ENCODE measurements at regions of chr18 and their contacts with region 1.

Region 1: DNA sequence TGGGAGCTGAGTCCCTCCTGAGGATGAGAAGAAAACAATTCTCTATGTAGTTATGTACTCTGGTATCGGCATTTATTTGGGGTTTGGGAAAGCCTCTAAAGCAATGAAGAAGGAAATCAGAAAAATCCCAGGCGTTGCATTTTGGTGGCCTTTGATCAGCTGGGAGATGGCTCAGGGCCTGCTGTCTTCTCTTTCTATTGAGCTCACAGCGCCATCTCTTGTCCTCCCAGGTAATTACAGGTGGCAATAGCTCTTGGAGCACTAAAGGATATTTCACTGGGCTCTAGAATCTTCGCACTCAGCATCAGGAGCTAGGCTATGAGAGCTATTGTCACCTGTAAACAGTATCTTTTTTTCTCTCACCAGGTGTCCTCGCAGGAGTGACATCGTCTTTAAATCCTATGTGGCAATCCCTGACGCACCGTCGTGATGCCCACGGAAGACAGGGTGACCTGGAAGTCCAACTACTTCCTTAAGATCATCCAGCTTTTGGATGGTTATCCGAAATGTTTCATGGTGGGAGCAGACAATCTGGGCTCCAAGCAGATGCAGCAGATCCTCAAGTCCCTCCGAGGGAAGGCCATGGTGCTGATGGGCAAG is 76.1 kb upstream of the PMAIP1 start:
- DNase-seq: peak; percentile 41 to 89
- H3K4me3 ChIP-seq: no peak overlapping the region
- H3K27ac ChIP-seq: no peak overlapping the region
- H3K4me1 ChIP-seq: no peaks in the 10 kb centered on the region
- H3K27me3 ChIP-seq: no peaks in the 10 kb centered on the region
- CTCF ChIP-seq: peak; percentile 44 to 91 (median 88)
- EP300 ChIP-seq: no peak
- POLR2A ChIP-seq: no peak
- RAD21 ChIP-seq: peak; percentile 98 to 99

Region 2: GRCh38 chr18:59453468-59453961 is 370.2 kb before region 1 on chr18:
- CTCF ChIA-PET with region 1: interaction called, 106 read pairs
- POLR2A ChIA-PET with region 1: no interaction called
- DNase-seq: no peak
- H3K4me3 ChIP-seq: no peak overlapping the region
- H3K27ac ChIP-seq: no peak overlapping the region
- H3K4me1 ChIP-seq: peaks cover 0 to 5% (median 1%) of the 10 kb centered on the region in 4 experiments; a peak in 2 of 7 replicates
- H3K27me3 ChIP-seq: no peaks in the 10 kb centered on the region
- CTCF ChIP-seq: no peak
- EP300 ChIP-seq: no peak
- POLR2A ChIP-seq: no peak
- RAD21 ChIP-seq: no peak

Region 3: GRCh38 chr18:59470561-59471121 is 353.1 kb before region 1 on chr18:
- CTCF ChIA-PET with region 1: interaction called, 11 read pairs
- POLR2A ChIA-PET with region 1: no interaction called
- DNase-seq: no peak
- H3K4me3 ChIP-seq: no peak overlapping the region
- H3K27ac ChIP-seq: no peak overlapping the region
- H3K4me1 ChIP-seq: no peaks in the 10 kb centered on the region; a peak in 1 of 7 replicates
- H3K27me3 ChIP-seq: no peaks in the 10 kb centered on the region
- CTCF ChIP-seq: no peak
- EP300 ChIP-seq: no peak
- POLR2A ChIP-seq: no peak
- RAD21 ChIP-seq: no peak

Region 4: DNA sequence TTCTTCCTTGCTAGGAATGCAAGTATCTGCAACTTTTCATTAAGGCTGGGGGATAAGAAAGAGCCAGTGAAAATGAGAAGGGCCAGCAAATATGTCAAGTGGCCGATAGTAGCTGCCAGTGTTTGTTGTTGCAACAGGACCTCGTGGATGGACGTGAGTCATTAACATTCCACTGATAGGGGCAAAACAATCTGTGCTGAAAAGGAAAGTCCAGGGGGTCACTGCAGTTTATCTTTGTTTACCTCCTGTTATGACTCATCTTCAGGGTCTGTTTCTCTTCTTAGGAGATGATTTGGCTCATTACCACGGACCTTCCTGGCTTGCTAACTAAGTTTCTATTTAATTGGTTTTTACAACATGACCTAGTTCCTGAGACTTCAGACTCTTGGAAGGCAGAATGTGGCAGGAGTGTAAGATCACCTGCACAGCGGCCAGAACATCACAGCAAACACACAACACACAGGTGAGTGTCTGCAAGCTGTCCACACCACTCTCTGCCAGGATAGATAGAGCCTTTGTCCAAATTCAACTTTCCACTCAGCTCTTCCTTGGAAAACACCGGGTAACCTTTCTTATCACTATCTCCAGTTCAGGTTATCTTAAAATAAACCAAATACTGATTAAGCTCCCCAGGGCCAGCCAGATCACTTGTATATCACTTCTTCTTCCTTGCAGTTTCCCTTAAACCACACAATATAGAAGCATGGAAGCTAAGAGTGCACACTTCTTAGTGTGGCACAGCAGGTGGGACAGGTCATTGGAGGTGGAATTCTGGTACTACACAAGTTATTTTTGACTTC is 307.1 kb before region 1 on chr18:
- CTCF ChIA-PET with region 1: no interaction called
- POLR2A ChIA-PET with region 1: no interaction called
- DNase-seq: no peak
- H3K4me3 ChIP-seq: no peak overlapping the region
- H3K27ac ChIP-seq: no peak overlapping the region
- H3K4me1 ChIP-seq: no peaks in the 10 kb centered on the region; a peak in 1 of 7 replicates
- H3K27me3 ChIP-seq: no peaks in the 10 kb centered on the region
- CTCF ChIP-seq: no peak
- EP300 ChIP-seq: no peak
- POLR2A ChIP-seq: no peak
- RAD21 ChIP-seq: no peak

Region 5: DNA sequence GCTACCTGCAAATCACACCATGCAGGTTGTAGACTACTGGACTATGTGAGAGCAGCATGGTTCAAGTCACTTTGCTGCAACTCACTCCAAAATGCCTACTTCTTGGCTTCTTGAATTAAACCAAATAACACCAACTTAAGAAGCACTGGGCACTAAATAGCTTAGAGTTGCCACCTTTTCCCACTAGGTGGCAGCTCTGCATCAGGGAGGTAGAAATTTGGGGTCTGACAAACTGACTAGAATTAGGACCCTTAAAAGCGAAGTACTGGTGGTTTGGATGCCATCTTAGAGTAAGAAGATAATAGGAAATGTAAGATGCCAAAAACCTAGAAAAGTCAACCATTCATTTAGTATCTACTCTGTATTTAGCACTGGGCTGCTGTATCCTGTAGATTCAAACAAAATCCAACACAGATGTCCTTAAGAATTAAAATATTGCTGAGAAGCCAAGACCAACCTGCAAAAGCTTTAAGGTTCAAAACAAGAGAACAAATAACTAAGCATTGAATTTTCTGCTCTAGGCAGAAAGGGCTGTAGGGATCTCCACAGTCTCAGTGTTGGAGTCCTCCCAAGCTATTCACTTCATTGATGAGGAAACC is 192.0 kb before region 1 on chr18:
- CTCF ChIA-PET with region 1: interaction called, 144 read pairs
- POLR2A ChIA-PET with region 1: interaction called, 4 read pairs
- DNase-seq: peak in 1 of 2 experiments; percentile 59
- H3K4me3 ChIP-seq: no peak overlapping the region
- H3K27ac ChIP-seq: no peak overlapping the region
- H3K4me1 ChIP-seq: peaks cover 0 to 9% (median 3%) of the 10 kb centered on the region in 4 experiments; a peak in 4 of 7 replicates
- H3K27me3 ChIP-seq: no peaks in the 10 kb centered on the region
- CTCF ChIP-seq: peak in 2 of 3 experiments; percentile 80 to 85; a peak in 3 of 4 replicates
- EP300 ChIP-seq: no peak
- POLR2A ChIP-seq: no peak
- RAD21 ChIP-seq: peak; percentile 94 to 95

Region 6: DNA sequence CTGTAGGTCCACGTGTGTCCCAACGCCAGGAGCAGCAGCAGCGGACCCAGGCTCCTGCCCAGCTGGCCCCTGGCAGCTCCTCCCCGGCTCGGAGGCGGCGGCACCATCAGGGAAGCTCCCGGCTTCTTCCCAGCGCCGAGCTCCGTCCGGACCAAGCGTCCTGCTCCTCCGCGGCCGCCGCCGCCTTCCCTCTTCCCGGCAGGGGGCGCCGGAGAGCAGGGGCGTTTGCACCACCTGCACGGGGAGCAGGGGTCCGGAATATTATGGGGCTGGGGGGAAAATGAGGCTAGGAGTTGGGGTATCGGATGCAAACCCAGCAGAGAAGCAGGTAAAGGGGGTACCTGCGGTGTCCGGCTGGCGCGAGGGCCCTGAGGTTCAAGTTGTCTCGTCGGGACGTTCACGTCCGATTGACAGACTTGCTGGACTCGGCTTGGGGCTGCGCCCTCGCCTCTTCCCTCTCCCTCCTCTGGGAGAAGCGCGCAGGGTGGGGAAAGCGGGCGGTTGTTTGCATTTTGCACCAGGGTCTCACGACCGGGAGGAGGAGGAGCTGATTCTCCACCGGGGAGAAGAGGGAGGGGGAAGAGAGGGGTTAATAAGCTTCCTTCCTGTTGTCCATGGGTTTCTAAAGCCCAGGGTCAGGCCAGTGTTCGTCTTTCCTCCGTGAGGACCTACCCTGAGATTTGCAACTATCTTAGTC is 126.3 kb before region 1 on chr18 and contains the start of gene CCBE1:
- CTCF ChIA-PET with region 1: interaction called, 31 read pairs
- POLR2A ChIA-PET with region 1: no interaction called
- DNase-seq: peak; percentile 49 to 96
- H3K4me3 ChIP-seq: peak within 1 kb of the TSS; percentile 65 to 80 (median 72)
- H3K27ac ChIP-seq: no peak within 1 kb of the TSS
- H3K4me1 ChIP-seq: peaks cover 7 to 34% (median 15%) of the 10 kb centered on the region in 4 experiments
- H3K27me3 ChIP-seq: peaks cover 7 to 35% (median 31%) of the 10 kb centered on the region in 4 experiments
- CTCF ChIP-seq: peak; percentile 81 to 88 (median 82)
- EP300 ChIP-seq: no peak
- POLR2A ChIP-seq: no peak
- RAD21 ChIP-seq: peak; percentile 55 to 68
- total RNA-seq, gene CCBE1: 2.6 and 4.4 TPM in 2 replicates

Region 7: GRCh38 chr18:59799383-59800015 is 24.2 kb before region 1 on chr18:
- CTCF ChIA-PET with region 1: interaction called, 10 read pairs
- POLR2A ChIA-PET with region 1: no interaction called
- DNase-seq: no peak
- H3K4me3 ChIP-seq: no peak overlapping the region
- H3K27ac ChIP-seq: no peak overlapping the region
- H3K4me1 ChIP-seq: no peaks in the 10 kb centered on the region
- H3K27me3 ChIP-seq: no peaks in the 10 kb centered on the region
- CTCF ChIP-seq: no peak
- EP300 ChIP-seq: no peak
- POLR2A ChIP-seq: no peak
- RAD21 ChIP-seq: no peak

Region 8: DNA sequence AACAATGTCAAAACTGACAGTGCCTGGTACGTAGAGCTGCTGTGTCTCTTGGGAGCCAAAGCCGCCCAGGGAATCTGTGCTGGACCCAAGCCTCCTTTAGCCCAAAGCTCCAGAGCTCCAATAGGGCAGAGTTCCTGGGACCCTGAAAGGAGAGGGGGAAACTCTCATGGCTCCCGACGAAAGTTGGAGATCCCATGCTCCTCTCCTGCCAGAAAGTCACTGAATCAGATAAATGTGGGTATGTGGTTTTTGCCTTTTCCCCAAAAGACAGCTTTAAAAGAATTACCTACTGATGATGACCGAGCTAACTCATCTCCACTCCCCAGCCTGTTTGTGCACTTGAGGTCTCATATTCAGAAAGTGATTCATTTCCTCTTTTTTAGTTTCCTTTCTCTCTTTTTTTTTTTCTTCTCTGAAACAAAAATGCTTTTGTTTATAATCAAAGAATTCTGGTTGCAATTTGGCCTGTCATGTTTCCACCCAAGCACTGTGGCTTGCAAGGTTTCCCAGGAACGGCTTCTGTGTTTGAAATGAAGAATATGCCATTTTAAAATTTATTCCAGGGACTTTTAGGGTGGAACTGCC is 62.0 kb after region 1 on chr18:
- CTCF ChIA-PET with region 1: interaction called, 11 read pairs
- POLR2A ChIA-PET with region 1: no interaction called
- DNase-seq: no peak
- H3K4me3 ChIP-seq: no peak overlapping the region
- H3K27ac ChIP-seq: no peak overlapping the region
- H3K4me1 ChIP-seq: peaks cover 0 to 9% (median 7%) of the 10 kb centered on the region in 4 experiments; a peak in 4 of 7 replicates
- H3K27me3 ChIP-seq: peaks cover 0 to 4% (median 0%) of the 10 kb centered on the region in 4 experiments; a peak in 1 of 7 replicates
- CTCF ChIP-seq: no peak
- EP300 ChIP-seq: no peak
- POLR2A ChIP-seq: no peak
- RAD21 ChIP-seq: no peak

Region 9: GRCh38 chr18:60215432-60215831 is 391.7 kb after region 1 on chr18:
- CTCF ChIA-PET with region 1: no interaction called
- POLR2A ChIA-PET with region 1: no interaction called
- DNase-seq: no peak
- H3K4me3 ChIP-seq: no peak overlapping the region
- H3K27ac ChIP-seq: no peak overlapping the region
- H3K4me1 ChIP-seq: no peaks in the 10 kb centered on the region
- H3K27me3 ChIP-seq: peaks cover 0 to 1% (median 0%) of the 10 kb centered on the region in 4 experiments; a peak in 1 of 7 replicates
- CTCF ChIP-seq: no peak
- EP300 ChIP-seq: no peak
- POLR2A ChIP-seq: no peak
- RAD21 ChIP-seq: no peak